Endothelial cell of umbilical vein (primary cell): ENCODE measurements at regions of chr9 and their contacts with region 1.

Region 1: GRCh38 chr9:129884220-129885017 is 49.2 kb downstream of the USP20 start:
- DNase-seq: peak; percentile 80
- H3K4me3 ChIP-seq: peak overlapping the region in 2 of 3 experiments; percentile 3 to 12
- H3K27ac ChIP-seq: no peak overlapping the region
- H3K4me1 ChIP-seq: peaks cover 23% of the 10 kb centered on the region
- H3K27me3 ChIP-seq: no peaks in the 10 kb centered on the region
- CTCF ChIP-seq: no peak
- POLR2A ChIP-seq: peak; percentile 28

Region 2: GRCh38 chr9:129610473-129611301 is 273.7 kb before region 1 on chr9:
- CTCF ChIA-PET with region 1: no interaction called
- POLR2A ChIA-PET with region 1: no interaction called
- dilution Hi-C with region 1: no loop called
- intact Hi-C with region 1: no loop called
- DNase-seq: peak; percentile 64
- H3K4me3 ChIP-seq: peak overlapping the region; percentile 24 to 56 (median 46)
- H3K27ac ChIP-seq: peak overlapping the region; percentile 16
- H3K4me1 ChIP-seq: peaks cover 14% of the 10 kb centered on the region
- H3K27me3 ChIP-seq: peaks cover 0 to 5% of the 10 kb centered on the region in 2 experiments
- CTCF ChIP-seq: peak; percentile 86 to 96
- POLR2A ChIP-seq: no peak

Region 3: GRCh38 chr9:129802851-129803675 is 81.4 kb before region 1 on chr9 and contains the start of gene TOR1B:
- CTCF ChIA-PET with region 1: no interaction called
- POLR2A ChIA-PET with region 1: no interaction called
- dilution Hi-C with region 1: no loop called
- intact Hi-C with region 1: no loop called
- DNase-seq: peak; percentile 96
- H3K4me3 ChIP-seq: peak within 1 kb of the TSS; percentile 59 to 89 (median 85)
- H3K27ac ChIP-seq: peak within 1 kb of the TSS; percentile 34
- H3K4me1 ChIP-seq: peaks cover 11% of the 10 kb centered on the region
- H3K27me3 ChIP-seq: no peaks in the 10 kb centered on the region
- CTCF ChIP-seq: no peak
- POLR2A ChIP-seq: peak; percentile 89
- total RNA-seq, gene TOR1B: 23.1 and 29.5 TPM in 2 replicates

Region 4: GRCh38 chr9:129907196-129907595 is 22.8 kb after region 1 on chr9:
- CTCF ChIA-PET with region 1: interaction called, 11 read pairs
- POLR2A ChIA-PET with region 1: no interaction called
- dilution Hi-C with region 1: no loop called
- intact Hi-C with region 1: no loop called
- DNase-seq: no peak
- H3K4me3 ChIP-seq: no peak overlapping the region
- H3K27ac ChIP-seq: no peak overlapping the region
- H3K4me1 ChIP-seq: peaks cover 3% of the 10 kb centered on the region
- H3K27me3 ChIP-seq: no peaks in the 10 kb centered on the region
- CTCF ChIP-seq: no peak
- POLR2A ChIP-seq: no peak

Region 5: GRCh38 chr9:130042833-130043653 is 158.6 kb after region 1 on chr9 and contains the start of gene FNBP1:
- CTCF ChIA-PET with region 1: interaction called, 5 read pairs
- POLR2A ChIA-PET with region 1: no interaction called
- dilution Hi-C with region 1: no loop called
- intact Hi-C with region 1: loop called (anchors 1 kb)
- DNase-seq: peak; percentile 80
- H3K4me3 ChIP-seq: peak within 1 kb of the TSS; percentile 68 to 92 (median 81)
- H3K27ac ChIP-seq: peak within 1 kb of the TSS; percentile 14
- H3K4me1 ChIP-seq: peaks cover 30% of the 10 kb centered on the region
- H3K27me3 ChIP-seq: no peaks in the 10 kb centered on the region
- CTCF ChIP-seq: no peak
- POLR2A ChIP-seq: no peak
- total RNA-seq, gene FNBP1: 36.2 and 43.9 TPM in 2 replicates

Region 6: DNA sequence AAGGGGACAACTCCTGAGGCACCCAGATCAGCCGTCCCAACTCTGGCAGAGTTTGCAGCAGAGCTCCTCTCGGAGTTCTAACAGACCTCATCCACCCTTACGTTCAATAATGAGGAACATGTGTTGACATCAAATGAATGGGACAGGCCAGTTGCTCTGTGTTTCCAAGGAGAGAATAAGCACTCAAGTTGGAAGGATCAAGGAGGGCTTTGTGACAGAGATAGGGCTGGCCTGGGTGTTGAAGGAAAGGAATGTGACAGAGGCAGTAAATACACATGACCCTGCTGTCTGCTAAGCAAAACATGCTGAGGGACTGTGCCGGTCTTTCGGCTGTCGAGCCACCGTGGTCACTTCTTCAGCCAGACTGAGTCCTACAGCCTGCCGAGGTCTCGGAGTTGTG is 217.5 kb after region 1 on chr9:
- CTCF ChIA-PET with region 1: interaction called, 33 read pairs
- POLR2A ChIA-PET with region 1: no interaction called
- dilution Hi-C with region 1: no loop called
- intact Hi-C with region 1: loop called (anchors 1 kb)
- DNase-seq: no peak
- H3K4me3 ChIP-seq: no peak overlapping the region
- H3K27ac ChIP-seq: no peak overlapping the region
- H3K4me1 ChIP-seq: peaks cover 4% of the 10 kb centered on the region
- H3K27me3 ChIP-seq: no peaks in the 10 kb centered on the region
- CTCF ChIP-seq: no peak
- POLR2A ChIP-seq: no peak